ENCODE measurements at regions of chr17 and their contacts with region 1.

Region 1: DNA sequence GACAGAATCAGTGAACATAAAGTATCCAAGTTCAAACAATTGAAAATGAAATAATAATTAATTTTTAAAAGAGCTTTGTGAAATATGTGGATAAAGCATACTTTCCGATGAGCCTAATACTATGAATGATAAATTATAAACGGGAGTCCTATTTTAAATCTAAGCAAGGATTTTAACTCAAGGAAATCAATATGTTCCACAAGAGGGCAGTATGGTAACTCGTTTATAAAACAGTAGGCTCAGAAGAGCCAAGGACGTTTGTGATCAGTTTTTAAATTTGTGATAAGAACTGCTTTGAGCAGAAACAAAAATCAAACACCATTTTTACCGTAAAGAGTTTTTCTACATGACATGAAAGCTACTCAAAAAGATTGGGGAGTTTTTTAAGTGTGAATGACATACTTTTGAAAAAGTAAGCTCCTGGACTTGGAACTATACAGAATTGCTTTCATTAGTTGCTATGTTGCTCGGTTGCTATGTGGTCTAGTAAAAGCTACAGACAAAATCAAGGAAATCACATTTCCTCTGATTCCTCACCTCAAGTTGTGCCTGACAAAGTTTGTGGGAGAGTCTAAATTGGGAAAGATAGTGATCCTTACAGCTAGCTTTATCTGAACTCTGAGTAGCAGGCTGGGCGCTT is 11.8 kb upstream of the TEKT1 start:
- DNase-seq: peak; percentile 73 to 83 (median 82)
- H3K4me3 ChIP-seq: peak overlapping the region in 1 of 7 experiments; percentile 50
- H3K27ac ChIP-seq: no peak overlapping the region
- H3K4me1 ChIP-seq: peaks cover 0 to 20% (median 5%) of the 10 kb centered on the region in 4 experiments
- H3K27me3 ChIP-seq: peaks cover 2 to 11% (median 3%) of the 10 kb centered on the region in 5 experiments

Region 2: DNA sequence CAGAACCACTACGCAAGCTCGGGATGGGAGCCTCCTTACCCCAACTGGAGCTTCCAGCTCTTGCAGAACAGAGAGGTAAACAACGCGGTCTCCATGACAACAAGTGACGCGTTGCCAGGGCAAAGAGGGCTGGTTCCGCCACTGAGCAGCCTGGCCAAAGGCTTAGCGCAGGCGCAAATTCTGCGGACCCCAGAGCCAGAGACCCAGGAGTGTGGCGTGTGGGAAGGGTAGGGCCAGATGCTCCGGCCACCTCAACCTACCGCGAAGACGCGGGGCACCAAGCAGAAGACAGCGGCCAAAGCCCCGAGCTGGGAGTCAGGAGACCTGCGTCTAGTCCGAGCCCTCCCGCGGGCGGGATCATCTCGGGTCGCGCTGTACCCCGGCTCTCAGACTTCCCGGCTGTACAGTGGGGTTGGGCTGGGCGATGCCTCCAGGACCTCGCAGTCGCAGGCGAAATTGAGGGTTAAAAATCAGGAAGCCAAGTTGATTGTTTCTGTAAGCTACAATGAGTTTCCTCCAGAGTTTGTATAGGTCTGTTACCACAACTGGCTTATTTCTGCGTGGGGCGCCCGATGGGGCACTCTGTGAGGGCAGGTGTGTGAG is 11.6 kb before region 1 on chr17 and contains the start of gene TEKT1:
- CTCF ChIA-PET with region 1: interaction called, 10 read pairs
- POLR2A ChIA-PET with region 1: no interaction called
- DNase-seq: peak; percentile 93 to 94 (median 93)
- H3K4me3 ChIP-seq: peak within 1 kb of the TSS in 6 of 7 experiments; percentile 37 to 80 (median 62)
- H3K27ac ChIP-seq: peak within 1 kb of the TSS in 1 of 2 experiments; percentile 38
- H3K4me1 ChIP-seq: peaks cover 2 to 16% (median 12%) of the 10 kb centered on the region in 4 experiments
- H3K27me3 ChIP-seq: peaks cover 18 to 28% (median 24%) of the 10 kb centered on the region in 5 experiments

Region 3: GRCh38 chr17:6853764-6854442 is 10.5 kb after region 1 on chr17:
- CTCF ChIA-PET with region 1: interaction called, 18 read pairs
- POLR2A ChIA-PET with region 1: no interaction called
- DNase-seq: peak in 2 of 3 donors; percentile 28 to 57
- H3K4me3 ChIP-seq: peak overlapping the region in 6 of 7 experiments; percentile 20 to 75 (median 46)
- H3K27ac ChIP-seq: peak overlapping the region; percentile 29 to 65
- H3K4me1 ChIP-seq: peaks cover 0 to 24% (median 2%) of the 10 kb centered on the region in 4 experiments
- H3K27me3 ChIP-seq: peaks cover 0 to 3% (median 0%) of the 10 kb centered on the region in 5 experiments

Region 4: GRCh38 chr17:6894206-6894528 is 50.8 kb after region 1 on chr17:
- CTCF ChIA-PET with region 1: interaction called, 26 read pairs
- POLR2A ChIA-PET with region 1: no interaction called
- DNase-seq: peak; percentile 24 to 72 (median 60)
- H3K4me3 ChIP-seq: peak overlapping the region in 2 of 7 experiments; percentile 13 to 23
- H3K27ac ChIP-seq: no peak overlapping the region
- H3K4me1 ChIP-seq: peaks cover 0 to 9% (median 2%) of the 10 kb centered on the region in 4 experiments
- H3K27me3 ChIP-seq: peaks cover 0 to 28% (median 13%) of the 10 kb centered on the region in 5 experiments

Region 5: GRCh38 chr17:6903326-6903900 is 60.1 kb after region 1 on chr17:
- CTCF ChIA-PET with region 1: interaction called, 13 read pairs
- POLR2A ChIA-PET with region 1: no interaction called
- DNase-seq: no peak
- H3K4me3 ChIP-seq: no peak overlapping the region
- H3K27ac ChIP-seq: no peak overlapping the region
- H3K4me1 ChIP-seq: peaks cover 0 to 14% (median 4%) of the 10 kb centered on the region in 4 experiments
- H3K27me3 ChIP-seq: no peaks in the 10 kb centered on the region

Region 6: DNA sequence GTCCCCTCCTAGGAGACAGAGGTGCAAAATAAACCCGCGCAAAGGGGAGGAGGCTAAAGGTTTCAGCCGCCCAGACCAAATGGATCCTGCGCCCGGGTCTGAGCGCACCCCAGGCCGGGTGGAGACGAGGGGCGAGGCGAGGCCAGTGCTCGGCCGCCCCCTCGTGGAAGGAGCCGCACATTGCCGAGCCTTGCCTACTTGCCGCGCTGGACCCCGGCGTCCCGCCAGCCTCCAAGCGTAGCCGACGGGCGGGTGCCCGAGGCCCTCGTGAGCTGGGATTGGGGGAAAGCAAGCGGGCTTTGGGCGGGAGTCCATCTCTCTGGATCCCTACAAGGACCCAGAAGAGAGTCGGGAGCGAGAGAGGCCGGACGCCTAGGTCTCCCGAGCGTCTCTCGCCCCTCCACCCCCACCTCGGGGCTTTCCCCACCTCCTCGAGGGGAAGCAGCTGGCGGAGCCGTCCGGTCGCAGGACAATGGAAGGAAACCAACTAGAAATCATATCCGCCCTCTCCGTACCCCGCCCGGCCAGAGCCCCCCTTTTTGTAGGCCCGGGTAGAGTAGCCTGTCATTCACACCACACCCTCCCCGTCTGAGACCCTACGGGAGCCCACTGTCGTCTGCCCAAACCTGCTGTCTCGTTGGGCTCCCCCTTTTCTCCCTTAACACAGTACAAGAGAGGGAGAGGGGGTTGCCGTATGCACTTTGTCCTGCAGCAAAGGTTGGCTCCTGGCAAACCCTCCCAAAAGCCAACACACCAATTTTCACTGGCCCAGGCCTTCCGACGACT is 178.8 kb after region 1 on chr17:
- CTCF ChIA-PET with region 1: interaction called, 13 read pairs
- POLR2A ChIA-PET with region 1: interaction called, 3 read pairs
- DNase-seq: peak; percentile 74 to 95 (median 95)
- H3K4me3 ChIP-seq: peak overlapping the region; percentile 2 to 74 (median 45)
- H3K27ac ChIP-seq: peak overlapping the region in 1 of 2 experiments; percentile 25
- H3K4me1 ChIP-seq: peaks cover 3 to 58% (median 41%) of the 10 kb centered on the region in 4 experiments
- H3K27me3 ChIP-seq: peaks cover 0 to 3% (median 0%) of the 10 kb centered on the region in 5 experiments